ENCODE measurements at regions of chr6 and their contacts with region 1.

Region 1: GRCh38 chr6:145887969-145888368 is 73.4 kb upstream of the FBXO30 start:
- DNase-seq: no peak
- ATAC-seq: peak; percentile 34 to 66 (median 56)
- H3K4me3 ChIP-seq: no peak overlapping the region
- H3K27ac ChIP-seq: no peak overlapping the region
- H3K4me1 ChIP-seq: peaks cover 38% of the 10 kb centered on the region
- H3K27me3 ChIP-seq: no peaks in the 10 kb centered on the region
- CTCF ChIP-seq: peak; percentile 55

Region 2: DNA sequence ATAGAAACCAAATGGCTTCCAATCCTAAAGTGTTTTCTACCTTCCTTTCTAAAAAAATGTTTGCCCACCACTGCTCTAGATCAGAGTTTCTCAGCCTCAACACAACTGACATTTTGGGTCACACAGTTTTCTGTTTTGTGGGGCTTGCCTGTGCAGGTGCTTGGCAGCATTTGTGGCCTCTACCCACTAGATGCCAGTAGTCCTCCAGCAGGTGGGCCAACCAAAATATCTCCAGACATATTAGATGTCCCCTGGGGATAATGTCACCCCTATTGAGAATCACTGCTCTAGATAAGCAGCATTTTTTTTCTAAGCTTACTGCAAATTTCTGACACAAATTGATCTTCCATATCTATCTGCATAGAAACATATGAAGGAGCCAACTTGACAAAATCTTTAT is 126.4 kb before region 1 on chr6:
- intact Hi-C with region 1: loop called in 1 of 2 experiments (anchors 10 kb)
- DNase-seq: no peak
- ATAC-seq: peak in 3 of 4 donors; percentile 63 to 76 (median 70)
- H3K4me3 ChIP-seq: no peak overlapping the region
- H3K27ac ChIP-seq: no peak overlapping the region
- H3K4me1 ChIP-seq: peaks cover 3% of the 10 kb centered on the region
- H3K27me3 ChIP-seq: no peaks in the 10 kb centered on the region
- CTCF ChIP-seq: peak; percentile 20

Region 3: DNA sequence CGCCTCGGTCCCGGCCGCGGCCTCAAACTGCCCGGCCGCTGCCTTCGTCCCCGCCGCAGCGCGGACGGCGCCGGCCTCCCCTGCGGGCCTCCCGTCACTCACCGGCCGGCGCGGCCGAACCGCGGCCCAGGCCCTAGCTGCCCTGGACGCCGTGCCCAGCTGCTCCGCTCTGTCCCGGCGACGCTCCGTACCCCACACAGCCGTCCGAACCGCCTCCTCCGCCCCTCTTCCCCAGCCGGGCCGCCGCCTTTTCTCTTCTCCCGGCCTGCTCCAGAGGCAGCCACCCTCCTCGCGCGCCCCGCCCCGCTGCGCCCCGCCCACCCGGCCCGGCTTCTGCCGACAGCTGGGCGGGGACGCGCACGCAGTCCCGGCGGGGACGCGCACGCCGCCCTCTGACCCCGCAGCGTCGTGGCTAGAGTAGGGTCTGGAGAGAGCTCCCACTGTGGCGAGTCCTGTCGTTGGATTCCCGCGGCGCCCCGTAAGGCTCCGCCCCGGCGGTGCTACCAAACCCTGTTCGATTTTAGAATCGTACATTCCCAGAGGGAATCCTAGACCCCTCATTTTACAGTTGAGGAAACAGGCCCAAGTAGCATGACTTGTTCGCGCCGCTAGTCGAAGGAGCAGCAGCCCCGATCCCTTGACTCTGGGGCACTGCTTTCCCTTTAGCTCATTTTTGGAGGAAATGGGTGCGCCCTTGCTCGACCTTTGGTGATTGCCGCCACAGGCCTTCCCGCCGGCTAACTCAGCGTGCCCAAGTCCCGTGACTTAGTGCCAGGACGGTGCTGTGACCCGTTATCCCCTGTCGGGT is 73.3 kb before region 1 on chr6 and contains the start of gene FBXO30:
- intact Hi-C with region 1: loop called in 1 of 2 experiments (anchors 5 kb)
- DNase-seq: peak; percentile 89 to 93
- ATAC-seq: peak; percentile 95 to 98 (median 95)
- H3K4me3 ChIP-seq: peak within 1 kb of the TSS; percentile 84
- H3K27ac ChIP-seq: peak within 1 kb of the TSS; percentile 98
- H3K4me1 ChIP-seq: peaks cover 52% of the 10 kb centered on the region
- H3K27me3 ChIP-seq: no peaks in the 10 kb centered on the region
- CTCF ChIP-seq: no peak
- total RNA-seq, gene FBXO30: 11.3 to 75.4 (median 20.5) TPM

Measured in psoas muscle (tissue), 8 donors.